Naive thymus-derived CD4-positive, alpha-beta T cell (primary cell): ENCODE measurements at regions of chr7 and their contacts with region 1.

Region 1: GRCh38 chr7:100852048-100852872 is at the start of gene SLC12A9:
- DNase-seq: peak; percentile 71 to 90 (median 85)
- ATAC-seq: peak; percentile 96
- H3K4me3 ChIP-seq: peak within 1 kb of the TSS; percentile 73
- H3K4me3 Mint-ChIP-seq: peak within 1 kb of the TSS; percentile 89 to 95 (median 92)
- H3K27ac ChIP-seq: peak within 1 kb of the TSS; percentile 76
- H3K27ac Mint-ChIP-seq: peak within 1 kb of the TSS; percentile 71 to 97 (median 90)
- H3K4me1 ChIP-seq: peaks cover 8 to 16% of the 10 kb centered on the region in 2 donors
- H3K4me1 Mint-ChIP-seq: peaks cover 0 to 31% (median 19%) of the 10 kb centered on the region in 7 donors
- H3K27me3 ChIP-seq: no peaks in the 10 kb centered on the region
- H3K27me3 Mint-ChIP-seq: no peaks in the 10 kb centered on the region
- total RNA-seq, gene SLC12A9: 50.4 to 78.6 (median 62.7) TPM

Region 2: DNA sequence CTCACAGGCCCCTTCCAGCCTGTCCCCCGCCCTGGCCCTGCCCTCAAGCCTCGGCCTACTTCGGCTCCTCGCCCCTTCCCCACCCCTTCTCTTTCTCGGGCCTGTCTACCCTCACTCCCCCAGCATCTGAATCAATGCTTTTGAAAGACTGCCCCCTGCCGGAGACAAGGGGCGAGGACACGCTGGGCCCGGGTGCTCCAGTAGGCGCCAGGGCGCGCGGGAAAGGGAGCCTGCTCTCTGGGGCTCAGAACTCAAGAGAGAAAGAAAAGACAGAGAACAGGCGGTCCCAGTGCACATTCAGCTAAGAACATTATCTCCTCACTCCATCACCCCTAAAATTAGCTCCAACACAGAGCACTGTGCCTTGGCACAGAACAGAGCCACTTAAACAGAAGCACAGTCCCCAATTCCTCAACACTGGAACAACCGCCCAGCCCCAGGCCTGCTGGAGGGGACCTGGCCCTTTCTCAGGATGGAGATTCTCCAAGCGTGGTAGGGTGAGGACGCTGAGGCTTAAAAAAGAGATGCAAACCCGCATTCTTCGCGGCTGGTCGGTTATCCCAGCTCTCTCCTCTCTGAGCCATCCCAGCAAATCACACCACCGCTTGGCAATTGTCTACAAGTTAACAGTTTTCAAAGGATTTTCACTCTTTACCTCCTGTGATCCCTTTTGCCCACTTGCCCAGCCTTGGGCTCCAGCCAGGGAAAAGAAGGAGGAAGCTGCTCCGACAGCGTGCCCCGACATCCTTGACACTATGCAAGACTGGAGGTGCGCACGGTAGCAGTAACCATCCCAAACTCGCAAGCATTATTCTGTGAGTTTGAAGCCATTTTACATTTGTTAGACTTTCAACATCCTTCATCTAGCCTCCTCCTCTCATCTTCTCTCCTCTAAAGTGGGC is 160.3 kb before region 1 on chr7:
- CTCF ChIA-PET with region 1: no interaction called
- POLR2A ChIA-PET with region 1: no interaction called
- intact Hi-C with region 1: loop called in 1 of 2 experiments (anchors 5 kb)
- DNase-seq: peak; percentile 64 to 85 (median 78)
- ATAC-seq: peak; percentile 79
- H3K4me3 ChIP-seq: peak overlapping the region; percentile 67
- H3K4me3 Mint-ChIP-seq: peak overlapping the region; percentile 92 to 100 (median 94)
- H3K27ac ChIP-seq: peak overlapping the region; percentile 73
- H3K27ac Mint-ChIP-seq: peak overlapping the region; percentile 62 to 96 (median 95)
- H3K4me1 ChIP-seq: peaks cover 23 to 27% of the 10 kb centered on the region in 2 donors
- H3K4me1 Mint-ChIP-seq: peaks cover 29 to 54% (median 41%) of the 10 kb centered on the region in 7 donors
- H3K27me3 ChIP-seq: no peaks in the 10 kb centered on the region
- H3K27me3 Mint-ChIP-seq: peaks cover 0 to 16% (median 0%) of the 10 kb centered on the region in 5 donors

Region 3: GRCh38 chr7:100799014-100799896 is 53.0 kb before region 1 on chr7:
- CTCF ChIA-PET with region 1: interaction called, 44 read pairs
- POLR2A ChIA-PET with region 1: interaction called, 3 read pairs
- intact Hi-C with region 1: loop called (anchors 1 kb)
- DNase-seq: peak in 8 of 9 donors; percentile 6 to 45 (median 36)
- ATAC-seq: peak; percentile 49
- H3K4me3 ChIP-seq: no peak overlapping the region
- H3K4me3 Mint-ChIP-seq: no peak overlapping the region
- H3K27ac ChIP-seq: no peak overlapping the region
- H3K27ac Mint-ChIP-seq: no peak overlapping the region
- H3K4me1 ChIP-seq: no peaks in the 10 kb centered on the region
- H3K4me1 Mint-ChIP-seq: peaks cover 0 to 17% (median 5%) of the 10 kb centered on the region in 7 donors
- H3K27me3 ChIP-seq: no peaks in the 10 kb centered on the region
- H3K27me3 Mint-ChIP-seq: peaks cover 2 to 30% (median 8%) of the 10 kb centered on the region in 5 donors

Region 4: GRCh38 chr7:100867040-100867775 is 14.9 kb after region 1 on chr7 and contains the start of gene TRIP6:
- CTCF ChIA-PET with region 1: interaction called, 13 read pairs
- POLR2A ChIA-PET with region 1: interaction called, 10 read pairs
- intact Hi-C with region 1: loop called (anchors 1 to 2 kb)
- DNase-seq: peak in 4 of 9 donors; percentile 18 to 83 (median 36)
- ATAC-seq: peak; percentile 44
- H3K4me3 ChIP-seq: peak within 1 kb of the TSS; percentile 46
- H3K4me3 Mint-ChIP-seq: peak within 1 kb of the TSS; percentile 69 to 92 (median 80)
- H3K27ac ChIP-seq: peak within 1 kb of the TSS; percentile 80
- H3K27ac Mint-ChIP-seq: peak within 1 kb of the TSS; percentile 62 to 95 (median 84)
- H3K4me1 ChIP-seq: peaks cover 0 to 25% of the 10 kb centered on the region in 2 donors
- H3K4me1 Mint-ChIP-seq: peaks cover 0 to 17% (median 11%) of the 10 kb centered on the region in 7 donors
- H3K27me3 ChIP-seq: no peaks in the 10 kb centered on the region
- H3K27me3 Mint-ChIP-seq: no peaks in the 10 kb centered on the region
- total RNA-seq, gene TRIP6: 8.0 to 28.1 (median 10.4) TPM

Region 5: GRCh38 chr7:101059627-101059942 is 207.3 kb after region 1 on chr7:
- CTCF ChIA-PET with region 1: no interaction called
- POLR2A ChIA-PET with region 1: no interaction called
- intact Hi-C with region 1: loop called in 1 of 2 experiments (anchors 1 kb)
- DNase-seq: no peak
- ATAC-seq: no peak
- H3K4me3 ChIP-seq: no peak overlapping the region
- H3K4me3 Mint-ChIP-seq: no peak overlapping the region
- H3K27ac ChIP-seq: no peak overlapping the region
- H3K27ac Mint-ChIP-seq: peak overlapping the region in 2 of 9 donors; percentile 11 to 52
- H3K4me1 ChIP-seq: no peaks in the 10 kb centered on the region
- H3K4me1 Mint-ChIP-seq: peaks cover 0 to 5% (median 0%) of the 10 kb centered on the region in 7 donors
- H3K27me3 ChIP-seq: no peaks in the 10 kb centered on the region
- H3K27me3 Mint-ChIP-seq: peaks cover 35 to 69% (median 62%) of the 10 kb centered on the region in 5 donors

Region 6: DNA sequence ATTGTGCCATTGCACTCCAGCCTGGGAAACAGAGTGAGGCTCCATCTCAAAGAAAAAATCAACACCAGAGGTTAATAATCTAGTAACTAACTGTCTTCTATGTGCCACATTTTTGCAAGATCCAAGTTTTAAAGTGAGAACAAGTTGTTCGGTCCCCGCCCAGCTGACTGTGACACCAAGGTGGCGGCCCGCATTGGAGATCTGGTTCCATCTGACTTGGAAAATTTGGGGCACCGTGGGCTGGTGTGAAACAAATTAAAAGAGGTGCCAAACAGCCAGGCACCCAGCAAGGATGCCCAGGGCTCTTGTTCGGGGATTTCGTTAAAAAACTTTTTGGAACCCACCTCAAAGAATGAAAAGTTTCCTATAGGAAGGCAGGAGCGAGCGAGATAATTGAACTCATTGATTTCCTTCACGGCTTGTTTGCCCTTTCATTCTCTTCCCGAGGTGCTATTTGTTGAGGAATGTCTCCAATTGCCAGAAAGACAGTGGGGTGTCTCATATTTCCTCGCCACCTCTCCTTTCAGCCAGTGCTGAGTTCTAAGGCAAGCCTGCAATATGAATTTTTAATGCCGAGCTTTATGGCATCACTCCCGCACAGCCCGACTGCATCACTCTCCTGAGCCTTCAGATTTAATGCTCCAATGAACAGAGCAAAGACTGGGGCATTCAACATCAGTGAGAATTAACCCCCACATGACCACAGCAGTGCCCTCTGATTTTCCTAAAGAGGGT is 1277.5 kb after region 1 on chr7:
- CTCF ChIA-PET with region 1: no interaction called
- POLR2A ChIA-PET with region 1: no interaction called
- intact Hi-C with region 1: no loop called
- DNase-seq: no peak
- ATAC-seq: no peak
- H3K4me3 ChIP-seq: no peak overlapping the region
- H3K4me3 Mint-ChIP-seq: no peak overlapping the region
- H3K27ac ChIP-seq: no peak overlapping the region
- H3K27ac Mint-ChIP-seq: no peak overlapping the region
- H3K4me1 ChIP-seq: no peaks in the 10 kb centered on the region
- H3K4me1 Mint-ChIP-seq: peaks cover 0 to 3% (median 0%) of the 10 kb centered on the region in 7 donors
- H3K27me3 ChIP-seq: no peaks in the 10 kb centered on the region
- H3K27me3 Mint-ChIP-seq: no peaks in the 10 kb centered on the region